ENCODE measurements at regions of chr4 and their contacts with region 1.

Region 1: GRCh38 chr4:48779998-48780742 is at the start of gene FRYL:
- DNase-seq: peak; percentile 91 to 100 (median 96)
- ATAC-seq: peak; percentile 84
- H3K4me3 ChIP-seq: peak within 1 kb of the TSS; percentile 81
- H3K4me3 Mint-ChIP-seq: peak within 1 kb of the TSS; percentile 93
- H3K27ac ChIP-seq: peak within 1 kb of the TSS; percentile 83 to 91
- H3K27ac Mint-ChIP-seq: peak within 1 kb of the TSS; percentile 84
- H3K4me1 ChIP-seq: peaks cover 18% of the 10 kb centered on the region
- H3K4me1 Mint-ChIP-seq: peaks cover 55% of the 10 kb centered on the region
- H3K27me3 ChIP-seq: no peaks in the 10 kb centered on the region
- H3K27me3 Mint-ChIP-seq: no peaks in the 10 kb centered on the region
- CTCF ChIP-seq: no peak
- total RNA-seq, gene FRYL: 86.1 to 87.7 TPM

Region 2: GRCh38 chr4:48307528-48307927 is 472.6 kb before region 1 on chr4:
- CTCF ChIA-PET with region 1: no interaction called
- POLR2A ChIA-PET with region 1: no interaction called
- intact Hi-C with region 1: no loop called
- DNase-seq: no peak
- ATAC-seq: no peak
- H3K4me3 ChIP-seq: no peak overlapping the region
- H3K4me3 Mint-ChIP-seq: no peak overlapping the region
- H3K27ac ChIP-seq: no peak overlapping the region
- H3K27ac Mint-ChIP-seq: no peak overlapping the region
- H3K4me1 ChIP-seq: no peaks in the 10 kb centered on the region
- H3K4me1 Mint-ChIP-seq: no peaks in the 10 kb centered on the region
- H3K27me3 ChIP-seq: no peaks in the 10 kb centered on the region
- H3K27me3 Mint-ChIP-seq: no peaks in the 10 kb centered on the region
- CTCF ChIP-seq: no peak

Region 3: GRCh38 chr4:48340965-48341775 is 439.0 kb before region 1 on chr4 and contains the start of gene SLAIN2:
- CTCF ChIA-PET with region 1: no interaction called
- POLR2A ChIA-PET with region 1: interaction called, 3 read pairs
- intact Hi-C with region 1: loop called in 1 of 2 experiments (anchors 10 kb)
- DNase-seq: peak; percentile 92 to 100 (median 98)
- ATAC-seq: peak; percentile 81
- H3K4me3 ChIP-seq: peak within 1 kb of the TSS; percentile 82
- H3K4me3 Mint-ChIP-seq: peak within 1 kb of the TSS; percentile 100
- H3K27ac ChIP-seq: peak within 1 kb of the TSS; percentile 91 to 95
- H3K27ac Mint-ChIP-seq: peak within 1 kb of the TSS; percentile 98
- H3K4me1 ChIP-seq: peaks cover 18% of the 10 kb centered on the region
- H3K4me1 Mint-ChIP-seq: peaks cover 54% of the 10 kb centered on the region
- H3K27me3 ChIP-seq: no peaks in the 10 kb centered on the region
- H3K27me3 Mint-ChIP-seq: no peaks in the 10 kb centered on the region
- CTCF ChIP-seq: peak; percentile 36
- total RNA-seq, gene SLAIN2: 46.3 to 47.0 TPM

Region 4: GRCh38 chr4:48483777-48484493 is 296.2 kb before region 1 on chr4:
- CTCF ChIA-PET with region 1: no interaction called
- POLR2A ChIA-PET with region 1: no interaction called
- intact Hi-C with region 1: no loop called
- DNase-seq: peak in 3 of 14 experiments; percentile 5 to 43 (median 35)
- ATAC-seq: peak; percentile 64
- H3K4me3 ChIP-seq: peak overlapping the region; percentile 16
- H3K4me3 Mint-ChIP-seq: peak overlapping the region; percentile 62
- H3K27ac ChIP-seq: no peak overlapping the region
- H3K27ac Mint-ChIP-seq: no peak overlapping the region
- H3K4me1 ChIP-seq: peaks cover 18% of the 10 kb centered on the region
- H3K4me1 Mint-ChIP-seq: peaks cover 12% of the 10 kb centered on the region
- H3K27me3 ChIP-seq: peaks cover 45 to 71% of the 10 kb centered on the region in 2 experiments
- H3K27me3 Mint-ChIP-seq: peaks cover 78% of the 10 kb centered on the region
- CTCF ChIP-seq: no peak

Region 5: DNA sequence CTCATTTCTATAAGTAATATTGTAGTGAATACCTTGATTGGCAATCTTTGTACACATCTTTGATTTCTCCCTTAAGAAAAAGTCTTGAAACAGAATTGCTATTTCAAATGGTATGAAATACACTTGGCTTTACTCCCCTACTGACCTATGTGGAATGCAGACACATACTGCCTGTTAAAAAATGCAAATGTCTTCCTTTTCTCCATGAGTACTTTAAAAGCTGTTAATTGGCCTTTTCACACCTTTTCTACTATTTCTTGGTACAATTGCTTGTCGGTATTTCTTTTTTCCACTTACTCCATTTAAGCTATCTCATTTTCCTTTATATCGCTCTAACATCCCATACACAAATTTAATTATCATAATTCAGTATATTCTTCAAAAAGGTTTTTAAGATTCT is 87.3 kb before region 1 on chr4:
- CTCF ChIA-PET with region 1: no interaction called
- POLR2A ChIA-PET with region 1: interaction called, 4 read pairs
- intact Hi-C with region 1: loop called (anchors 5 kb)
- DNase-seq: no peak
- ATAC-seq: no peak
- H3K4me3 ChIP-seq: no peak overlapping the region
- H3K4me3 Mint-ChIP-seq: no peak overlapping the region
- H3K27ac ChIP-seq: no peak overlapping the region
- H3K27ac Mint-ChIP-seq: peak overlapping the region; percentile 7
- H3K4me1 ChIP-seq: peaks cover 3% of the 10 kb centered on the region
- H3K4me1 Mint-ChIP-seq: peaks cover 71% of the 10 kb centered on the region
- H3K27me3 ChIP-seq: no peaks in the 10 kb centered on the region
- H3K27me3 Mint-ChIP-seq: no peaks in the 10 kb centered on the region
- CTCF ChIP-seq: no peak

Region 6: GRCh38 chr4:48722509-48723446 is 57.4 kb before region 1 on chr4:
- CTCF ChIA-PET with region 1: no interaction called
- POLR2A ChIA-PET with region 1: interaction called, 18 read pairs
- intact Hi-C with region 1: loop called (anchors 5 to 10 kb)
- DNase-seq: no peak
- ATAC-seq: no peak
- H3K4me3 ChIP-seq: no peak overlapping the region
- H3K4me3 Mint-ChIP-seq: no peak overlapping the region
- H3K27ac ChIP-seq: no peak overlapping the region
- H3K27ac Mint-ChIP-seq: peak overlapping the region; percentile 1
- H3K4me1 ChIP-seq: peaks cover 14% of the 10 kb centered on the region
- H3K4me1 Mint-ChIP-seq: peaks cover 77% of the 10 kb centered on the region
- H3K27me3 ChIP-seq: no peaks in the 10 kb centered on the region
- H3K27me3 Mint-ChIP-seq: no peaks in the 10 kb centered on the region
- CTCF ChIP-seq: no peak

Region 7: DNA sequence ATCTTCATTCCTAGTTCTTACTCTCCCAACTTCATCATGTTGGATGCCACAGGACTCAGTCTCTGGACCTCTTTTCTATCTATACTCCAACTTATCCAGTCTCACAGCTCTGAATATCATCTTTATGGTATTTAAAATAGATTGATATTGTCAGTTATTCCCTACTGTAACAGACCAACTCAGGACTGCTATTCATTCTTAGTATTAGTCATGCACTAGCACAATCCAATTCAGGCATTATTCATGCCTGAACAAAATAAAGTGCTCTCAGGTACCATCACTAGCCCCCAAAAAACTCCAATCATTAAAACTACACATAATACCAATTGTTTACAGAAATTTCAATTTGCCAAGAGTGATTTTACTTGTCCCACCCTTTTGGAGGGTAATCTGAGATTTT is 37.8 kb before region 1 on chr4:
- CTCF ChIA-PET with region 1: no interaction called
- POLR2A ChIA-PET with region 1: interaction called, 6 read pairs
- intact Hi-C with region 1: loop called in 1 of 2 experiments (anchors 2 kb)
- DNase-seq: no peak
- ATAC-seq: no peak
- H3K4me3 ChIP-seq: no peak overlapping the region
- H3K4me3 Mint-ChIP-seq: no peak overlapping the region
- H3K27ac ChIP-seq: no peak overlapping the region
- H3K27ac Mint-ChIP-seq: peak overlapping the region; percentile 67
- H3K4me1 ChIP-seq: peaks cover 35% of the 10 kb centered on the region
- H3K4me1 Mint-ChIP-seq: peaks cover 90% of the 10 kb centered on the region
- H3K27me3 ChIP-seq: no peaks in the 10 kb centered on the region
- H3K27me3 Mint-ChIP-seq: no peaks in the 10 kb centered on the region
- CTCF ChIP-seq: no peak

Region 8: GRCh38 chr4:48906206-48907173 is 126.3 kb after region 1 on chr4 and contains the start of gene OCIAD2:
- CTCF ChIA-PET with region 1: interaction called, 4 read pairs
- POLR2A ChIA-PET with region 1: interaction called, 35 read pairs
- intact Hi-C with region 1: loop called (anchors 1 to 5 kb)
- DNase-seq: peak; percentile 70 to 93 (median 86)
- ATAC-seq: peak; percentile 97
- H3K4me3 ChIP-seq: peak within 1 kb of the TSS; percentile 74
- H3K4me3 Mint-ChIP-seq: peak within 1 kb of the TSS; percentile 92
- H3K27ac ChIP-seq: peak within 1 kb of the TSS; percentile 73 to 82
- H3K27ac Mint-ChIP-seq: peak within 1 kb of the TSS; percentile 92
- H3K4me1 ChIP-seq: peaks cover 40% of the 10 kb centered on the region
- H3K4me1 Mint-ChIP-seq: peaks cover 49% of the 10 kb centered on the region
- H3K27me3 ChIP-seq: no peaks in the 10 kb centered on the region
- H3K27me3 Mint-ChIP-seq: no peaks in the 10 kb centered on the region
- CTCF ChIP-seq: peak; percentile 62
- total RNA-seq, gene OCIAD2: 77.0 to 91.1 TPM

Measured in CD4-positive, alpha-beta T cell (primary cell).